GM12878 (cell line): ENCODE measurements at regions of chr1 and their contacts with region 1.

Region 1: GRCh38 chr1:155946633-155947219 is 5.3 kb downstream of the RXFP4 start:
- DNase-seq: no peak
- ATAC-seq: peak; percentile 49
- H3K4me3 ChIP-seq: peak overlapping the region; percentile 12
- H3K27ac ChIP-seq: peak overlapping the region; percentile 79
- H3K4me1 ChIP-seq: peaks cover 50% of the 10 kb centered on the region
- H3K27me3 ChIP-seq: no peaks in the 10 kb centered on the region
- CTCF ChIP-seq: no peak
- EP300 ChIP-seq: no peak; a peak in 1 of 4 replicates
- POLR2A ChIP-seq: no peak
- RAD21 ChIP-seq: no peak

Region 2: DNA sequence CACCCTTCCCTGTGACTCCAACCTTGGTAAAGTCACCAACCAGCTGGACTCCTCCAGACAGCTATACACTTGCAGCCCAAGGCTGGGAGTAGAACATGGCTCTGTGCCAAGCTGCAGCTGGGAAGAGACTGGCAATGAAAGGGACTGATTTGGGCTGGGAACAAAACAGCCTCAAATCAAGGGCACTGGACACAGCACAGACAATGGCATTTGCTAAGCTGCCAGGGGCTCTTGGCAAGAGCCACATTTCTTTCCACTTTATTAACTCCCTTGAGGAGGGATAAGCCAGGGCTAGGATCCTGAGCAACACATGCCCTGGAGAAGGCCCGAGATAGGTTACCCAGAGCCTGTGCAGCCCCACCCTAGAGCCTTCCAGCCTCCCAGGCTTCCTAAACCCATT is 75.3 kb before region 1 on chr1:
- CTCF ChIA-PET with region 1: no interaction called
- POLR2A ChIA-PET with region 1: no interaction called
- RAD21 ChIA-PET with region 1: no interaction called
- SMC1A ChIA-PET with region 1: no interaction called
- in situ Hi-C with region 1: no loop called
- intact Hi-C with region 1: no loop called
- DNase-seq: no peak
- ATAC-seq: no peak
- H3K4me3 ChIP-seq: no peak overlapping the region
- H3K27ac ChIP-seq: no peak overlapping the region
- H3K4me1 ChIP-seq: no peaks in the 10 kb centered on the region
- H3K27me3 ChIP-seq: no peaks in the 10 kb centered on the region
- CTCF ChIP-seq: no peak
- EP300 ChIP-seq: no peak
- POLR2A ChIP-seq: no peak
- RAD21 ChIP-seq: no peak

Region 3: GRCh38 chr1:155961937-155962336 is 15.2 kb after region 1 on chr1:
- CTCF ChIA-PET with region 1: interaction called, 11 read pairs
- POLR2A ChIA-PET with region 1: interaction called, 7 read pairs
- RAD21 ChIA-PET with region 1: interaction called, 36 read pairs
- SMC1A ChIA-PET with region 1: interaction called, 29 read pairs
- in situ Hi-C with region 1: no loop called
- intact Hi-C with region 1: no loop called
- DNase-seq: no peak
- ATAC-seq: 0 out of 3 replicates have a peak, but pooled peaks have one; percentile 5
- H3K4me3 ChIP-seq: no peak overlapping the region
- H3K27ac ChIP-seq: no peak overlapping the region; the same call in 1 of the 2 replicates
- H3K4me1 ChIP-seq: peaks cover 39% of the 10 kb centered on the region
- H3K27me3 ChIP-seq: no peaks in the 10 kb centered on the region
- CTCF ChIP-seq: peak in 1 of 3 experiments; percentile 9; a peak in 1 of 6 replicates
- EP300 ChIP-seq: no peak
- POLR2A ChIP-seq: peak; percentile 57; the same call in 1 of the 2 replicates
- RAD21 ChIP-seq: peak; percentile 39

Region 4: DNA sequence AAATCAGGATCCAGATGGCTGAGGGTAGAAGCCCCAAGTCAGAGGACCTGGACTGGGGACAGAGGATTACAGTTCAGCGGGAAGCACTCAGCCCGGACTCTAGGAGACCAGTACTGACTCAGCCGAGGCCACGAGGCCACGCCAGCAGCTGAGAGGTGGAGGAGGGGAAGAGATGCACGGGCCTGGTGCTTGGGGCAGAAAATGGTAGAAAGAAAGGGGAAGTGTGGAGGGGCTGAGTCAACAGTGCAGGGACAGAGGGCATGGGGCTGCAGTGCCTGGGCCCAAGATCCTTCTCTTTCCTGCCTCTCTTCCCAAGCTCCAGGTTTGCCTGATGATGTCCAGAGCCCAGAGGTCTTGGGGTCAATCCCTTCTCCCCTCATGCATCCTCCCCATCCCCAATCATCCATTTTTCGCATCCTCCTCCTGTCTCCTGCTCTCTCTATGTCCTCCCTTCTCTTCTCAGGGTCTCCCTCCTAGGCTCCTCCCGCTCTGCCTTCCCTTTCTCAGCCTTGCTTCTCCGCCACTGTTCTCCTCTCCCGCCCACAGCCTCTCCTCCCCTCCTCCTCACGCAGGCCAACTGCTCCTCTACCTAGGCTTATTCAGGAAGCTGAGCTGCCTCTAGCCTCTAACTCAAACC is 23.9 kb after region 1 on chr1:
- CTCF ChIA-PET with region 1: interaction called, 9 read pairs
- POLR2A ChIA-PET with region 1: interaction called, 273 read pairs
- RAD21 ChIA-PET with region 1: interaction called, 214 read pairs
- SMC1A ChIA-PET with region 1: interaction called, 133 read pairs
- in situ Hi-C with region 1: no loop called
- intact Hi-C with region 1: no loop called
- DNase-seq: no peak
- ATAC-seq: peak; percentile 90
- H3K4me3 ChIP-seq: peak overlapping the region; percentile 70
- H3K27ac ChIP-seq: peak overlapping the region; percentile 23
- H3K4me1 ChIP-seq: peaks cover 57% of the 10 kb centered on the region
- H3K27me3 ChIP-seq: no peaks in the 10 kb centered on the region
- CTCF ChIP-seq: no peak
- EP300 ChIP-seq: peak in 1 of 2 experiments; percentile 46; a peak in 1 of 4 replicates
- POLR2A ChIP-seq: 0 out of 2 replicates have a peak, but pooled peaks have one; percentile 34
- RAD21 ChIP-seq: no peak

Region 5: DNA sequence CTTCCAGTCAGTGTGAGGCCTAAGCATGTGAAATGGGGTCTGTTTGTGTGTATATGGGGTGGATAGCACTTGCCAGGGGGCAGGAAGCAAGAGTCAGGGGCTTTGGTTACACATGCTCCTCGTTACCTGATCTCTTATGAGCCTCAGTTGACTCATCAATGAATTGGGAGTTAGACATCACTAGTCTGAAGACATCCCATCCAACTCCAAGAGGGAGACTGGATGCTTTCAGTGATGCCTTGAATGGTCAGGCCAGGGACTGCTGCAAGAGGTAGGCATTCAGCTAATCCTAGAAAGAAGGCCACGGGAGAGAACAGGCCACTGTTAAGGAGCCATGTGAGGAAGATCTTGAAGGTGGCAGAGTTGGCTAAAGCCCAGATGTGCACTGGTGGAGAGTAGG is 120.5 kb after region 1 on chr1:
- CTCF ChIA-PET with region 1: interaction called, 30 read pairs
- POLR2A ChIA-PET with region 1: interaction called, 3 read pairs
- RAD21 ChIA-PET with region 1: interaction called, 12 read pairs
- SMC1A ChIA-PET with region 1: interaction called, 5 read pairs
- in situ Hi-C with region 1: no loop called
- intact Hi-C with region 1: no loop called
- DNase-seq: no peak
- ATAC-seq: no peak
- H3K4me3 ChIP-seq: no peak overlapping the region
- H3K27ac ChIP-seq: no peak overlapping the region
- H3K4me1 ChIP-seq: no peaks in the 10 kb centered on the region
- H3K27me3 ChIP-seq: no peaks in the 10 kb centered on the region
- CTCF ChIP-seq: no peak
- EP300 ChIP-seq: no peak
- POLR2A ChIP-seq: no peak
- RAD21 ChIP-seq: no peak